CD8-positive, alpha-beta T cell (primary cell): ENCODE measurements at regions of chr3 and their contacts with region 1.

Region 1: GRCh38 chr3:180912304-180913296 is at the start of gene FXR1:
- DNase-seq: peak; percentile 76 to 94 (median 90)
- ATAC-seq: peak; percentile 84
- H3K4me3 ChIP-seq: peak within 1 kb of the TSS; percentile 96 to 98
- H3K4me3 Mint-ChIP-seq: peak within 1 kb of the TSS; percentile 97
- H3K27ac ChIP-seq: peak within 1 kb of the TSS; percentile 93 to 95
- H3K27ac Mint-ChIP-seq: peak within 1 kb of the TSS; percentile 96
- H3K4me1 ChIP-seq: peaks cover 47% of the 10 kb centered on the region
- H3K4me1 Mint-ChIP-seq: peaks cover 72% of the 10 kb centered on the region
- H3K27me3 ChIP-seq: no peaks in the 10 kb centered on the region
- H3K27me3 Mint-ChIP-seq: no peaks in the 10 kb centered on the region
- CTCF ChIP-seq: no peak
- total RNA-seq, gene FXR1: 192 to 206 TPM

Region 2: GRCh38 chr3:179604321-179605078 is 1308.1 kb before region 1 on chr3 and contains the starts of genes MRPL47 and NDUFB5:
- CTCF ChIA-PET with region 1: no interaction called
- POLR2A ChIA-PET with region 1: interaction called, 4 read pairs
- intact Hi-C with region 1: loop called in 1 of 2 experiments (anchors 2 kb)
- DNase-seq: peak; percentile 81 to 98 (median 93)
- ATAC-seq: peak; percentile 99
- H3K4me3 ChIP-seq: peak within 1 kb of the TSS; percentile 82 to 96
- H3K4me3 Mint-ChIP-seq: peak within 1 kb of the TSS; percentile 97
- H3K27ac ChIP-seq: peak within 1 kb of the TSS; percentile 93 to 98
- H3K27ac Mint-ChIP-seq: peak within 1 kb of the TSS; percentile 100
- H3K4me1 ChIP-seq: peaks cover 13% of the 10 kb centered on the region
- H3K4me1 Mint-ChIP-seq: peaks cover 55% of the 10 kb centered on the region
- H3K27me3 ChIP-seq: no peaks in the 10 kb centered on the region
- H3K27me3 Mint-ChIP-seq: no peaks in the 10 kb centered on the region
- CTCF ChIP-seq: no peak
- total RNA-seq, gene MRPL47: 36.4 to 37.8 TPM
- total RNA-seq, gene NDUFB5: 21.0 to 25.6 TPM

Region 3: GRCh38 chr3:179743913-179744312 is 1168.7 kb before region 1 on chr3:
- CTCF ChIA-PET with region 1: no interaction called
- POLR2A ChIA-PET with region 1: no interaction called
- intact Hi-C with region 1: no loop called
- DNase-seq: no peak
- ATAC-seq: no peak
- H3K4me3 ChIP-seq: no peak overlapping the region
- H3K4me3 Mint-ChIP-seq: no peak overlapping the region
- H3K27ac ChIP-seq: no peak overlapping the region
- H3K27ac Mint-ChIP-seq: no peak overlapping the region
- H3K4me1 ChIP-seq: no peaks in the 10 kb centered on the region
- H3K4me1 Mint-ChIP-seq: no peaks in the 10 kb centered on the region
- H3K27me3 ChIP-seq: no peaks in the 10 kb centered on the region
- H3K27me3 Mint-ChIP-seq: no peaks in the 10 kb centered on the region
- CTCF ChIP-seq: no peak

Region 4: DNA sequence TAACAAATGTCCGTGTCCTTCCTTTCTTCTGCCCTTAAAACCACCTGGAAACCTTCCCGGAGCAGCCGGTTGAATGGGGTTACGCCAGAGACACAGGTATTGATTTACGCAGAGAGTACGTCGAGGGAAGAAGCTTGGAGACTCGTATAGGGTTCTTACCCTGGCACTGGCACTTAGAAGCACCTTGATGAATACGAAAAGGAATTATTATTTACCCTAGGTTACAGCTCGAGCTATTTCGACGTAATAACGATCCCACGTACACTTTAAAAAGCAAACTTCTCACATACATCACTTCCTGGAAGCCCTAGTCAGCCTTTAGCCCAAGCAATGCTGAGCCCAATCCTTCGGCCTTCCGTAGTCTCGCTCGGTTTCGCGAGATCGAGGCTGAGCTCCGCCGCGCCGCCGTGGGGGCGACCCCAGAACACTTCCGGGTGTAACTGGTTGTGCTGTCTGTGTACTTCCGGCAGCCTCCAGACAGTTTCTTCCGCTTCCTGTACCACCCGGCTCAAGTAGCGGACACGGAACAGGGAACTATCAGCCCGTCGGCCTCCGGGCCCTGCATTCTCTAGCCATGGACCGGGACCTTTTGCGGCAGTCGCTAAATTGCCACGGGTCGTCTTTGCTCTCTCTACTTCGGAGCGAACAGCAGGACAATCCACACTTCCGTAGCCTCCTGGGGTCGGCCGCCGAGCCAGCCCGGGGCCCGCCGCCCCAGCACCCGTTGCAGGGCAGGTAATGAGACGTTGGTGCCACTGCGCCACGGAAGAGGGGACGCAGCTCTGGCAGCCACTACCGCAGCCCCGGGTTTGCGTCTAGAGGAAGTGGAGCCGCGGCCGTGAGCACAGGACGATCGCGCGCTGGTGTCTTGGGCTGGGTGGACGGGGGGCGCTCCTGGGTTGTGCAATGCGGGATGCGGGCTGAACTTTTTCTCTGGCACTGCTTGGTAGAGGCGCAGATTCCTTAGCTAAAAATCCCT is 310.6 kb before region 1 on chr3 and contains the start of gene TTC14:
- CTCF ChIA-PET with region 1: no interaction called
- POLR2A ChIA-PET with region 1: interaction called, 12 read pairs
- intact Hi-C with region 1: loop called (anchors 1 to 2 kb)
- DNase-seq: peak; percentile 86 to 97 (median 93)
- ATAC-seq: peak; percentile 86
- H3K4me3 ChIP-seq: peak within 1 kb of the TSS; percentile 93 to 97
- H3K4me3 Mint-ChIP-seq: peak within 1 kb of the TSS; percentile 97
- H3K27ac ChIP-seq: peak within 1 kb of the TSS; percentile 94 to 95
- H3K27ac Mint-ChIP-seq: peak within 1 kb of the TSS; percentile 94
- H3K4me1 ChIP-seq: peaks cover 11% of the 10 kb centered on the region
- H3K4me1 Mint-ChIP-seq: peaks cover 43% of the 10 kb centered on the region
- H3K27me3 ChIP-seq: no peaks in the 10 kb centered on the region
- H3K27me3 Mint-ChIP-seq: peaks cover 15% of the 10 kb centered on the region
- CTCF ChIP-seq: no peak
- total RNA-seq, gene TTC14: 70.2 to 84.8 TPM

Region 5: GRCh38 chr3:180989291-180990163 is 76.9 kb after region 1 on chr3 and contains the start of gene DNAJC19:
- CTCF ChIA-PET with region 1: interaction called, 4 read pairs
- POLR2A ChIA-PET with region 1: interaction called, 7 read pairs
- intact Hi-C with region 1: loop called (anchors 1 kb)
- DNase-seq: peak; percentile 82 to 97 (median 90)
- ATAC-seq: peak; percentile 95
- H3K4me3 ChIP-seq: peak within 1 kb of the TSS; percentile 74 to 93
- H3K4me3 Mint-ChIP-seq: peak within 1 kb of the TSS; percentile 97
- H3K27ac ChIP-seq: peak within 1 kb of the TSS; percentile 74
- H3K27ac Mint-ChIP-seq: peak within 1 kb of the TSS; percentile 97
- H3K4me1 ChIP-seq: peaks cover 11% of the 10 kb centered on the region
- H3K4me1 Mint-ChIP-seq: peaks cover 51% of the 10 kb centered on the region
- H3K27me3 ChIP-seq: no peaks in the 10 kb centered on the region
- H3K27me3 Mint-ChIP-seq: peaks cover 3% of the 10 kb centered on the region
- CTCF ChIP-seq: no peak
- total RNA-seq, gene DNAJC19: 35.5 to 42.3 TPM